ENCODE measurements at regions of chr17 and their contacts with region 1.

Region 1: GRCh38 chr17:75632863-75633485 is at the start of gene SMIM5:
- DNase-seq: peak; percentile 84
- H3K4me3 Mint-ChIP-seq: no peak within 1 kb of the TSS
- H3K27ac Mint-ChIP-seq: no peak within 1 kb of the TSS
- H3K4me1 Mint-ChIP-seq: no peaks in the 10 kb centered on the region
- H3K27me3 Mint-ChIP-seq: no peaks in the 10 kb centered on the region
- total RNA-seq, gene SMIM5: not detected

Region 2: DNA sequence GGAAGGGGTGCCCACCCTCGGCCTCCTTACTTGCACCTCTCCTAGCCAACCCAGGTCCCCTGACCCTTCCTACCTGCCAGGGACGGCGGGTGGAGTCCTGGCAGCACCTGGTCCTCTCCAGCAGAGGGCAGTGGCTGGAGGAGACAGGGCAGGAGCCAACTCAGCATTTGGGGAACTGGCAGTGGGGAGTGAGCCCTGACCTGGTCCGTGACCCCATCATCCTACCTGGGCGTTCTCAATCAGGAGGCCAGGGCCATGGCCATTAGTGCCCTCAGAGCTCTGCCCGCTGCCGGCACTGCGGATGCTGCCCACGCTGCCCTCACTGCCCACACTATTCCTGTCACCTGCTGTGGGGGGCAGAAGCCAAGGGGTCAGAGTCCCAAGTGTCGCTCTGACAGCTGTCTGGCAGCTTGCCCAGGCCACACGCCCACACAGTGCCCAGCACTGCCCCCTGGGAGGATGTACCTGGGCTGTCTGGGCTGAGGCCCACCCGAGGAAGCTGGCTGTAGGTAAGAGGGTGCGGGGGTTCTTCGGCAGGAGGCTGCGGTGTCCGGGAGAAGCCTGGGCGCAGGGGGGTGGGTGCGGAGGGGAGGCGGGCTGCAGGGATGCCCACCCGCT is 128.5 kb before region 1 on chr17:
- CTCF ChIA-PET with region 1: no interaction called
- POLR2A ChIA-PET with region 1: no interaction called
- DNase-seq: peak; percentile 44
- H3K4me3 Mint-ChIP-seq: no peak overlapping the region
- H3K27ac Mint-ChIP-seq: no peak overlapping the region
- H3K4me1 Mint-ChIP-seq: no peaks in the 10 kb centered on the region
- H3K27me3 Mint-ChIP-seq: no peaks in the 10 kb centered on the region

Region 3: GRCh38 chr17:75601057-75602051 is 31.6 kb before region 1 on chr17:
- CTCF ChIA-PET with region 1: interaction called, 11 read pairs
- POLR2A ChIA-PET with region 1: no interaction called
- DNase-seq: peak; percentile 74
- H3K4me3 Mint-ChIP-seq: no peak overlapping the region
- H3K27ac Mint-ChIP-seq: no peak overlapping the region
- H3K4me1 Mint-ChIP-seq: peaks cover 3% of the 10 kb centered on the region
- H3K27me3 Mint-ChIP-seq: no peaks in the 10 kb centered on the region

Region 4: DNA sequence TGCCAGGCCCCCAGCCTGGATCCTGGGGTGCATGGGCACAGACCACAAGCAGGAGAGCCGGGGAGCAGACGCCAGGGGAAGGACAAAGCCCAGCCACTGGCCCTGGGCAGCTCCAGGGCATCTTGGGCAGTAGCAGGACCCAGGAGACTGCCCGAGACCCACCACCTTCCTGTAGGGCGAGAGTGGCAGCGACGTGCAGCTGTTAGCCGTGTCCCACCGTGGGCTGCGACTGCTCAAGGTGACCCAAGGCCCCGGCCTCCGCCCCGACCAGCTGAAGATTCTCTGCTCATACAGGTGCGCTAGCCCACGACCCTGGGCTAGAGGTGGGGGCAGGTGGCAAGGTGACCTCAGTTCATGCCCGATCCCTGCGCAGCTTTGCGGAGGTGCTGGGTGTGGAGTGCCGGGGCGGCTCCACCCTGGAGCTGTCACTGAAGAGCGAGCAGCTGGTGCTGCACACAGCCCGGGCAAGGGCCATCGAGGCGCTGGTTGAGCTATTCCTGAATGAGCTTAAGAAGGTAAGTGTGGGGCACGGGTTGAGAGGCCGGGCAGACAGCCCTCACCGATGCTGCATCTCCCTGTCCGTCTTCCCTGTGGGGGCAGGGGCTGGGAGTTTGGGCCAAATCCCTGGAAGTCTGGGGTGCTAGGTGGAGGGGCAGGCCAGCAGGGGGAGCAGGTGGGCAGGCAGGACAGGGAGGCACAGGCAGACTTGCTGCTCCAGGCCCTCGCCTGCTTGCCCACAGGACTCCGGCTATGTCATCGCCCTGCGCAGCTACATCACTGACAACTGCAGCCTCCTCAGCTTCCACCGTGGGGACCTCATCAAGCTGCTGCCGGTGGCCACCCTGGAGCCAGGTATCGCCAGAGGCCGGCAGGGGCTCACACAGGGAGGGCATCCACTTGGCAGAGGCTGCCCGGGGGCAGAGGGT is 13.2 kb before region 1 on chr17:
- CTCF ChIA-PET with region 1: interaction called, 23 read pairs
- POLR2A ChIA-PET with region 1: no interaction called
- DNase-seq: peak; percentile 29
- H3K4me3 Mint-ChIP-seq: no peak overlapping the region
- H3K27ac Mint-ChIP-seq: no peak overlapping the region
- H3K4me1 Mint-ChIP-seq: no peaks in the 10 kb centered on the region
- H3K27me3 Mint-ChIP-seq: no peaks in the 10 kb centered on the region

Region 5: GRCh38 chr17:75652915-75653549 is 20.1 kb after region 1 on chr17:
- CTCF ChIA-PET with region 1: interaction called, 31 read pairs
- POLR2A ChIA-PET with region 1: no interaction called
- DNase-seq: no peak
- H3K4me3 Mint-ChIP-seq: no peak overlapping the region
- H3K27ac Mint-ChIP-seq: peak overlapping the region; percentile 42
- H3K4me1 Mint-ChIP-seq: peaks cover 2% of the 10 kb centered on the region
- H3K27me3 Mint-ChIP-seq: no peaks in the 10 kb centered on the region

Region 6: GRCh38 chr17:75703591-75703990 is 70.6 kb after region 1 on chr17:
- CTCF ChIA-PET with region 1: interaction called, 10 read pairs
- POLR2A ChIA-PET with region 1: no interaction called
- DNase-seq: no peak
- H3K4me3 Mint-ChIP-seq: no peak overlapping the region
- H3K27ac Mint-ChIP-seq: no peak overlapping the region
- H3K4me1 Mint-ChIP-seq: no peaks in the 10 kb centered on the region
- H3K27me3 Mint-ChIP-seq: no peaks in the 10 kb centered on the region

Region 7: DNA sequence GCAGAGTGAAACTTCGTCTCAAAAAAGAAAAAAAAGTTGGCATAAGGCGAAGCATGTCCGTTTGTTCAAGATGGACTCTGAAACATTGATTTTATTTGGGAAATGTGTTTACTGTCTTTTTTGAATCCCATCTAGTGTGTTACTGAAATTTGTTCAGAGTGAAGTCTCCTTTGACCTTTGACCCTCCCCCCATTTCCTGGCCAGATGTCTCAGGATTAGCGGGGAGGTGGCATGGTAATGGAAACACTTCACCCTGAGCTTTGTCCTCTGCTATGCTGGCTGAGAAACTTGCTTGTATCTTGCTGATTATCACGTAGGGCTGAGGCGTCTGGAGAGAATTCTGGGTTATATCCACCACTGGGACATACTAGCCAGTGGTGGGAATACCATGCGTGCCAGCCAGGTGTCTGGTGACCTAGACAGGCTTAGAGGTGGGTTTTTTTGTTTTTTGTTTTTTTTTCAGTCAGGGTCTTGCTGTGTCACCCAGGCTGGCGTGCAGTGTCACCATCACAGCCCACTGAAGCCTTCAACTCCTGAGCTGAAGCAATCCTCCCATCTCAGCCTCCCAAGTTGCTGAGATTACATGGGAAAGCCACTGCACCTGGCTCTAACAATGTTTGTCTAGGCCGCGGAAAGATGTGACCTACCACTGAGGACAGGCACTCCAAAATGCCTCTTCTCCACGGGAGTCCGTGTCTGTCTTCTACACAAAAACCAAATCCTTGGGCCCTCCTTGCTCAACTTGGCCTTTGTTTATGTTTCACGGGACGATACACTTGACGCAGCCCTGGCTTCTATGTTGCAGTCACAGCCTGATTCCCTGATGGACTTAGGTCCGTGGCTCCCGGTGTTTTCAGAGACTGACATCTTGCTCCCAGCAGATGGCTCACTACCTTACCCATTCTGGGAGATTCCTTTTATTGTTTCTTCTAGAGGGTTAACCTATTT is 138.6 kb after region 1 on chr17:
- CTCF ChIA-PET with region 1: no interaction called
- POLR2A ChIA-PET with region 1: no interaction called
- DNase-seq: no peak
- H3K4me3 Mint-ChIP-seq: no peak overlapping the region
- H3K27ac Mint-ChIP-seq: peak overlapping the region; percentile 34
- H3K4me1 Mint-ChIP-seq: peaks cover 12% of the 10 kb centered on the region
- H3K27me3 Mint-ChIP-seq: peaks cover 4% of the 10 kb centered on the region

Region 8: DNA sequence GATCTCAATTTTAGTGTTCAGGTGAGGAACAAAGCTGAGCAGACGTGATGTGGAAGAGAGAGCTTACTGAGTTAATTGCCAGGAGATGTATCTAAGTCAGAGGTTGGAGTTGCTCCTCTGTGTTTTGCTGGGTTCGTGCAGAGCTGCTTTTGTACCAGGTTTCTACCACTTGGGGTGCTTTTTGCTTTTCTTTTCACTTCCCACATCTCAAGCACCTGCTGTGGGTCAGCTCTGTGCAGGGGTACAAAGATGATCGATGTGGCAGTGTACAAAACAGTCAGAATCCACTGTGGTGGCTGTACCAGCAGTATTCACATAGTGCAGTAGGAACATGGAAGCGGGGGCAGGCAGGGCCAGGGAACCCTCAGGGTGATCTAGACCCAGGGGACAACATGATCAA is 166.4 kb after region 1 on chr17:
- CTCF ChIA-PET with region 1: no interaction called
- POLR2A ChIA-PET with region 1: no interaction called
- DNase-seq: no peak
- H3K4me3 Mint-ChIP-seq: no peak overlapping the region
- H3K27ac Mint-ChIP-seq: no peak overlapping the region
- H3K4me1 Mint-ChIP-seq: peaks cover 17% of the 10 kb centered on the region
- H3K27me3 Mint-ChIP-seq: no peaks in the 10 kb centered on the region

Measured in activated CD4-positive, alpha-beta memory T cell treated with anti-CD3 and anti-CD28 coated beads, Interleukin-2, amount 10 ng/mL, durations not matched to agents 7 days and 5 days (primary cell).